ENCODE measurements at regions of chr11 and their contacts with region 1.

Region 1: GRCh38 chr11:13955971-13956421 is 6.5 kb upstream of the SPON1 start:
- DNase-seq: peak in 1 of 2 experiments; percentile 73
- ATAC-seq: peak; percentile 56 to 87; a peak in 3 of 6 replicates
- H3K4me3 ChIP-seq: no peak overlapping the region
- H3K27ac ChIP-seq: no peak overlapping the region
- H3K4me1 ChIP-seq: no peaks in the 10 kb centered on the region
- CTCF ChIP-seq: peak; percentile 89
- EP300 ChIP-seq: no peak
- POLR2A ChIP-seq: no peak
- RAD21 ChIP-seq: peak; percentile 91 to 95

Region 2: DNA sequence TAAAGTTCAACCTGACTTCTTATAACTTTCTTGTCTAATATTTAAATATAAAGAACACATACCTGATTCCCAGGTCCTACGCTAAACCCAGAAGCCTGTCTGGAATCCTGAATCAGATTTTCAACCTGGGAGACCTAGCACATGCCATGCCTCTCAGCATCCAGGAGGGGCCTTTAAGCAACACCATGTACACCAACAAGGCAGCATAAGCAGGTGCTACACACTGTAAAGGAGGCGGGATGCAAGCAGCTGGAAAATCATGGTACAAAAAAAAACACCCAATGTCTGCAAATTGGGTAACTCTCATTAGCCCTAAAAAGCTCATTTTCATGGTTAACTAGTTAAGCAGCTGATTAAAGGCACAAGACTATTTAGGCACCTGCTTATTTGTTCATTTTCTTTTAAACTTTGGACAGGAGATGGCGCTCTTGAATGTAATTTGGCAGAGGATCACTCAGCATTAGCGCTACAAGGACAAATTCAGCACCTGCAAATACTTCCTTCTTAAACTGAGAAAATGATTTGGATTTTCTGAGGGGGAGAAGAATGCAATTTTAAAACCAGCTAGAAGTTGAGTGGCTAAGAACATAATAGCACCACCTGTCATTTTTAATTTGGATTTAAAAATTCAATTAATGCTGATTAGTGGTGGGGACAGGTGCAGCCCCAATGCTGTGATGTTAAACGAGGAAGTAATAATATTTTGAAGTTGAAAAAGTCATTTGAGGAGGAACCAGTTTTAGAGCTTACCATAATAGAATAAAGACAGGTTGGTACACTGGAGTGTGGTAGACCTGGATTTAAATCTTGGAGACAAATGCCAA is 183.6 kb before region 1 on chr11:
- CTCF ChIA-PET with region 1: interaction called, 10 read pairs
- POLR2A ChIA-PET with region 1: no interaction called
- DNase-seq: peak; percentile 16 to 72
- ATAC-seq: peak; percentile 79 to 88
- H3K4me3 ChIP-seq: no peak overlapping the region
- H3K27ac ChIP-seq: no peak overlapping the region
- H3K4me1 ChIP-seq: no peaks in the 10 kb centered on the region
- CTCF ChIP-seq: peak; percentile 71
- EP300 ChIP-seq: no peak
- POLR2A ChIP-seq: no peak
- RAD21 ChIP-seq: peak; percentile 70 to 76

Region 3: DNA sequence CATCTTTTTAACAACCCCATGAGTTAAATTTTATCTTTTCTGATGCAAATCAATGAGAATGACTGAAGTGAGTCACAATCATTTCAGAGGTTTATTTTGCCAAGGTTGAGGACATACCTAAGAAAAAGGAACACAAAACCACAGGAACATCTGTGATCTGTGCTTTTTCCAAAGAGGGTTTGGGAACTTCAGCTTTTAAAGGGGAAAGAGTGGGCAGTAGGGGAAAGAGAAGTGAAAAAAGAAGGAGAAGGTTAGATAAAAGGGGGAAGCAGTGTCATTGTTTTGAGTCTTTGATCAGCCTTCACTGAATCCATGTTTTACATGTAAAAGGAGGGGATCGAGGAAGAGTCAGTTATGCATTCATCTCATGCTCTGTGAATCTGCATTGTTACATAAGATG is 38.7 kb before region 1 on chr11:
- CTCF ChIA-PET with region 1: no interaction called
- POLR2A ChIA-PET with region 1: no interaction called
- DNase-seq: no peak
- ATAC-seq: no peak
- H3K4me3 ChIP-seq: no peak overlapping the region
- H3K27ac ChIP-seq: no peak overlapping the region
- H3K4me1 ChIP-seq: no peaks in the 10 kb centered on the region
- CTCF ChIP-seq: no peak
- EP300 ChIP-seq: no peak
- POLR2A ChIP-seq: no peak
- RAD21 ChIP-seq: no peak

Region 4: DNA sequence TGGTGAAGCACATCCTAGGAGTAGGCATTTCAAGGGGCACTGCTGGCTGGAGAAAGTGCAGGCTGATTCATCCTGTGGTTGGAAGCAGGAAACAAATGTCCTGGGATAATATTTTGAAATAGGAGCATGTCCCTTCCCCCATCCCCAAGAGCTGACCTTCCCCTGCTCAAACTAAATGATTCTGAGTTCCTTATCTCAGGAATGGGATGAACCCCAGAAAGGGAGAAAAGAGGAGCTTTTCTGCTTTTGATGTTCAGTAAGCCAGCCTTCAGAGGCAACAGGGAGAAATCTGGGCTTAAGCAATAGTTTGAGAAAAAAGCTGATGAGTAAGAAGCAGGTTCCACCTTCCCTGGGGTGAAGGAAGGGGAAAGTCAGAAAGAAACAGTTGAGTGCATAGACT is 13.0 kb before region 1 on chr11:
- CTCF ChIA-PET with region 1: interaction called, 13 read pairs
- POLR2A ChIA-PET with region 1: no interaction called
- DNase-seq: no peak
- ATAC-seq: peak; percentile 33 to 66; a peak in 2 of 6 replicates
- H3K4me3 ChIP-seq: no peak overlapping the region
- H3K27ac ChIP-seq: 0 out of 6 replicates have a peak overlapping the region, but pooled peaks have one; percentile 7 to 15
- H3K4me1 ChIP-seq: peaks cover 20% of the 10 kb centered on the region; the same call in 2 of the 3 replicates
- CTCF ChIP-seq: no peak
- EP300 ChIP-seq: no peak
- POLR2A ChIP-seq: no peak
- RAD21 ChIP-seq: no peak

Region 5: DNA sequence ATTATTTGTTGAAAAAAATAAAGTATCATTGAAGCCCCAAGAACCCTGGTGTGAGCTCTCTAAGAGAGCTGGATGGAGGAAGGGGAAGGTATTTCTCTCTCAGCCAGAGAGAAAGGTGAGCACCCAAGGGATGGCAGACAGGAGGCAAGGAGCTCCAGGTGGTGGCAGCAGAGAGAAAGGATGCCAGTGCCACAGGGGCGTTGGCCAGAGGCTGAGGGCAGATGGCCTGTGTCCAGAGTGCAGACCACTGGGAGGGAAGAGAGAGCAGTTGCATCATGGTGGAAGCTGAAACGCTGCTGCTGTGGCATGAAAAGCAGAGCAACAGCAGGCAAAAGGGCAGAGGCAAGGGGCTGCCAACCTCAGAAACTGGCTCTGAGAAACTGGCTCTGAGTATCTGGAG is 15.0 kb after region 1 on chr11:
- CTCF ChIA-PET with region 1: interaction called, 66 read pairs
- POLR2A ChIA-PET with region 1: no interaction called
- DNase-seq: peak; percentile 28 to 41
- ATAC-seq: peak; percentile 88 to 94
- H3K4me3 ChIP-seq: no peak overlapping the region
- H3K27ac ChIP-seq: no peak overlapping the region
- H3K4me1 ChIP-seq: 0 out of 3 replicates have a peak, but pooled peaks cover 2% of the 10 kb centered on the region
- CTCF ChIP-seq: peak; percentile 55
- EP300 ChIP-seq: no peak
- POLR2A ChIP-seq: no peak
- RAD21 ChIP-seq: peak; percentile 68 to 83

Region 6: GRCh38 chr11:14075118-14076078 is 119.4 kb after region 1 on chr11:
- CTCF ChIA-PET with region 1: no interaction called
- POLR2A ChIA-PET with region 1: no interaction called
- DNase-seq: no peak
- ATAC-seq: no peak
- H3K4me3 ChIP-seq: no peak overlapping the region
- H3K27ac ChIP-seq: no peak overlapping the region
- H3K4me1 ChIP-seq: no peaks in the 10 kb centered on the region
- CTCF ChIP-seq: no peak
- EP300 ChIP-seq: no peak
- POLR2A ChIP-seq: no peak
- RAD21 ChIP-seq: no peak

Region 7: DNA sequence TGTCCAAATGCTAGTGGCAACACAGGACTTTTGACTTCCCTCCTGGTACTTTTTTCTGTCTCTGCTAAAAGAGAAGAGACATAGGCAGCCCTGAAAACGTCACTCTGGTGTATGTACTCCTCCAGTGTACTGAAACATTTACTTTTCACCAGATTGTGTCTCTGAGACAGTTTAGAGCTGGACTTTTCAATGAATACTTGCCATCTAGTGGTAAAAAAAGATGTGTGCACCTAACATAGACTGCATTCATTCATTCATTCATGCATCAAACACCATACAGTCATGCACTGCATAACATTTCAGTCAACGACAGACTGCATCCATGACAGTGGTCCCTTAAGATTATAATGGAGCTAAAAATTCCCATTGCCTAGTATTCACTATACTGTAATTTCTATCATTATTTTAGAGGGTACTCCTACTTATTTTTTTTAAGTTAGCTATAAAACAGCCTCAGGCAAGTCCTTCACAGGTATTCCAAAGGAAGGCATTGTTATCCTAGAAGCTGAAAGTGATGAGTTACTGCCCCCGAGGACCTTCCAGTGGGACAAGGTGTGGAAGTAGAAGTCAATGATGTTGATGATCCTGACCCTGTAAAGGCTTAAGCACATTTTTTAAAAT is 192.8 kb after region 1 on chr11:
- CTCF ChIA-PET with region 1: interaction called, 97 read pairs
- POLR2A ChIA-PET with region 1: no interaction called
- DNase-seq: peak; percentile 10 to 46
- ATAC-seq: peak; percentile 88 to 93
- H3K4me3 ChIP-seq: no peak overlapping the region
- H3K27ac ChIP-seq: no peak overlapping the region
- H3K4me1 ChIP-seq: no peaks in the 10 kb centered on the region
- CTCF ChIP-seq: peak; percentile 58
- EP300 ChIP-seq: no peak
- POLR2A ChIP-seq: no peak
- RAD21 ChIP-seq: peak; percentile 67 to 68

Region 8: GRCh38 chr11:14249121-14249963 is 293.3 kb after region 1 on chr11:
- CTCF ChIA-PET with region 1: interaction called, 63 read pairs
- POLR2A ChIA-PET with region 1: interaction called, 3 read pairs
- DNase-seq: peak; percentile 33 to 57
- ATAC-seq: peak; percentile 63 to 83
- H3K4me3 ChIP-seq: no peak overlapping the region
- H3K27ac ChIP-seq: no peak overlapping the region
- H3K4me1 ChIP-seq: no peaks in the 10 kb centered on the region
- CTCF ChIP-seq: peak; percentile 96
- EP300 ChIP-seq: no peak
- POLR2A ChIP-seq: no peak
- RAD21 ChIP-seq: peak; percentile 95 to 98

Measured in A549 (cell line).